PC-9 (cell line): ENCODE measurements at regions of chr3 and their contacts with region 1.

Region 1: GRCh38 chr3:48918388-48919214 is at the start of gene ARIH2:
- DNase-seq: peak; percentile 84 to 87
- H3K4me3 ChIP-seq: peak within 1 kb of the TSS; percentile 62
- H3K27ac ChIP-seq: peak within 1 kb of the TSS; percentile 96
- H3K4me1 ChIP-seq: peaks cover 13% of the 10 kb centered on the region
- H3K27me3 ChIP-seq: no peaks in the 10 kb centered on the region
- CTCF ChIP-seq: no peak
- total RNA-seq, gene ARIH2: 86.1 and 96.8 TPM in 2 replicates

Region 2: GRCh38 chr3:48855681-48856447 is 62.7 kb before region 1 on chr3:
- CTCF ChIA-PET with region 1: no interaction called
- POLR2A ChIA-PET with region 1: no interaction called
- intact Hi-C with region 1: no loop called
- DNase-seq: no peak
- H3K4me3 ChIP-seq: no peak overlapping the region
- H3K27ac ChIP-seq: no peak overlapping the region
- H3K4me1 ChIP-seq: peaks cover 11% of the 10 kb centered on the region
- H3K27me3 ChIP-seq: no peaks in the 10 kb centered on the region
- CTCF ChIP-seq: no peak

Region 3: DNA sequence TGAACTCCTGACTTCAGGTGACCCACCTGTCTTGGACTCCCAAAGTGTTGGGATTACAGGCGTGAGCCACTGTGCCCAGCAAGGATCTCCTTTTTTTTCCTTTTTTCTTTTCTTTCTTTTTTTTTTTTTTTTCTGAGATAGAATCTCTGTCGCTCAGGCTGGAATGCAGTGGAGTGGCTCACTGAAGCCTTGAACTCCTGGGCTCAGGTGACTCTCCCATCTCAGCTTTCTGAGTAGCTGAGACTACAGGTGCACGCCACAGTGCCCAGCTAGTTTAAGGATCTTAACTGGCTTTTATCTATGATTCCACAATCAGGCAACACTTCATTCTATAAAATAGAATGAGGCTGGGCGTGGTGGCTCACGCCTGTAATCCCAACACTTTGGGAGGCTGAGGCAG is 526.8 kb after region 1 on chr3:
- CTCF ChIA-PET with region 1: interaction called, 13 read pairs
- POLR2A ChIA-PET with region 1: no interaction called
- intact Hi-C with region 1: no loop called
- DNase-seq: no peak
- H3K4me3 ChIP-seq: no peak overlapping the region
- H3K27ac ChIP-seq: no peak overlapping the region
- H3K4me1 ChIP-seq: peaks cover 17% of the 10 kb centered on the region
- H3K27me3 ChIP-seq: no peaks in the 10 kb centered on the region
- CTCF ChIP-seq: no peak